Adrenal gland (tissue), 19 donors: ENCODE measurements at regions of chr4 and their contacts with region 1.

Region 1: GRCh38 chr4:77819843-77820648 is 878 bp upstream of the CNOT6L start:
- DNase-seq: peak; percentile 88 to 96 (median 92)
- H3K4me3 ChIP-seq: peak overlapping the region; percentile 43 to 96 (median 72)
- H3K27ac ChIP-seq: peak overlapping the region; percentile 82 to 99 (median 97)
- H3K4me1 ChIP-seq: peaks cover 10 to 45% of the 10 kb centered on the region in 2 donors
- H3K27me3 ChIP-seq: no peaks in the 10 kb centered on the region
- CTCF ChIP-seq: peak in 1 of 6 experiments; percentile 13
- POLR2A ChIP-seq: peak; percentile 27 to 78

Region 2: GRCh38 chr4:77629885-77630284 is 190.2 kb before region 1 on chr4:
- intact Hi-C with region 1: loop called in 1 of 2 experiments (anchors 10 kb)
- DNase-seq: no peak
- H3K4me3 ChIP-seq: no peak overlapping the region
- H3K27ac ChIP-seq: no peak overlapping the region
- H3K4me1 ChIP-seq: no peaks in the 10 kb centered on the region
- H3K27me3 ChIP-seq: no peaks in the 10 kb centered on the region
- CTCF ChIP-seq: no peak
- POLR2A ChIP-seq: no peak

Region 3: GRCh38 chr4:77862478-77863216 is 42.6 kb after region 1 on chr4 and contains the start of gene MRPL1:
- intact Hi-C with region 1: loop called in 1 of 2 experiments (anchors 10 kb)
- DNase-seq: peak; percentile 88 to 98 (median 94)
- H3K4me3 ChIP-seq: peak within 1 kb of the TSS; percentile 34 to 93 (median 66)
- H3K27ac ChIP-seq: peak within 1 kb of the TSS; percentile 89 to 99 (median 97)
- H3K4me1 ChIP-seq: peaks cover 0 to 17% of the 10 kb centered on the region in 2 donors
- H3K27me3 ChIP-seq: no peaks in the 10 kb centered on the region
- CTCF ChIP-seq: peak in 1 of 6 experiments; percentile 27
- POLR2A ChIP-seq: peak; percentile 72 to 92
- total RNA-seq, gene MRPL1: 14.3 to 65.3 (median 25.2) TPM